Left colon (tissue), 2 donors: ENCODE measurements at regions of chr16 and their contacts with region 1.

Region 1: DNA sequence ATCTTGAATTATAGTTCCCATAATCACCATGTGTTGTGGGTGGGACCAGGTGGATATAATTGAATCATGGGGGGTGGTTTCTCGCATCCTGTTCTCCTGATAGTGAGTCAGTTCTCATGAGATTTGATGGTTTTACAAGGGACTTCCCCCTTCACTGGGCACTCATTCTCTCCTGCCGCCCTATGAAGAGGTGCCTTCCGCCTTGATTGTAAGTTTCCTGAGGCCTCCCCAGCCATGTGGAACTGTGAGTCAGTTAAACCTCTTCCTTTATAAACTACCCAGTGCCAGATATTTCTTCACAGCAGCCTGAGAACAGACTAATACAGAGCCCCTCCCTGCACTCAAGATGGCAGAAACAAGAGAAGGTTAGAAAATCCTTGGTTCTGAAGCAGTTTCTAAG is 26.4 kb downstream of the LDAF1 start:
- DNase-seq: no peak
- ATAC-seq: peak; percentile 5

Region 2: GRCh38 chr16:21056396-21056795 is 128.4 kb before region 1 on chr16:
- intact Hi-C with region 1: no loop called
- DNase-seq: no peak
- ATAC-seq: peak; percentile 24

Region 3: GRCh38 chr16:21277927-21278706 is 93.3 kb after region 1 on chr16 and contains the start of gene CRYM:
- intact Hi-C with region 1: loop called in 1 of 2 experiments (anchors 10 kb)
- DNase-seq: peak; percentile 58 to 88
- ATAC-seq: peak; percentile 98
- total RNA-seq, gene CRYM: 12.9 to 15.7 TPM